ENCODE measurements at regions of chr9 and their contacts with region 1.

Region 1: DNA sequence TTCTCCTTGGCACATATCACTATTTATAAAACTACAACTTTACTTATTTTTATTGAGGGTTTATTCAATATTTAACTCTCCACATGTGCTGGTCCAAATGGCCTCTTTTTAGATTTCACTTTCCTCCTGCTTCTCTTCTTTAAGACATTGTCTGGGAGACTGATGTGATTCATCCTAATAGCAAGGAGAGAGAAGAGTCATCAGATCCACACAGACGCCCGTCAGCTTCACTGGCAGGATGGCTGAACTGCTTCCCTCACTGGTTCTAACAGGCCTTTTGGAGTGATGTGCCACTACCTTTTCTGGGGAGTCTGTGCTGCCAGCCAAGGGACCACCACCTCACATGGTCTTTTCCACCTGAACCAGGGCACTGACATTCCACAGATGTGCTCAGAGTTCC is 16.5 kb upstream of the ROR2 start:
- DNase-seq: no peak
- H3K4me3 ChIP-seq: no peak overlapping the region
- H3K27ac ChIP-seq: no peak overlapping the region
- H3K4me1 ChIP-seq: no peaks in the 10 kb centered on the region
- H3K27me3 ChIP-seq: no peaks in the 10 kb centered on the region
- CTCF ChIP-seq: no peak
- EP300 ChIP-seq: no peak
- POLR2A ChIP-seq: no peak
- RAD21 ChIP-seq: no peak

Region 2: GRCh38 chr9:91978739-91979414 is 12.4 kb after region 1 on chr9:
- CTCF ChIA-PET with region 1: interaction called, 18 read pairs
- POLR2A ChIA-PET with region 1: no interaction called
- DNase-seq: peak in 1 of 2 experiments; percentile 58
- H3K4me3 ChIP-seq: no peak overlapping the region
- H3K27ac ChIP-seq: no peak overlapping the region
- H3K4me1 ChIP-seq: no peaks in the 10 kb centered on the region
- H3K27me3 ChIP-seq: no peaks in the 10 kb centered on the region
- CTCF ChIP-seq: peak; percentile 56 to 86 (median 75)
- EP300 ChIP-seq: no peak
- POLR2A ChIP-seq: no peak
- RAD21 ChIP-seq: peak; percentile 80 to 86

Region 3: DNA sequence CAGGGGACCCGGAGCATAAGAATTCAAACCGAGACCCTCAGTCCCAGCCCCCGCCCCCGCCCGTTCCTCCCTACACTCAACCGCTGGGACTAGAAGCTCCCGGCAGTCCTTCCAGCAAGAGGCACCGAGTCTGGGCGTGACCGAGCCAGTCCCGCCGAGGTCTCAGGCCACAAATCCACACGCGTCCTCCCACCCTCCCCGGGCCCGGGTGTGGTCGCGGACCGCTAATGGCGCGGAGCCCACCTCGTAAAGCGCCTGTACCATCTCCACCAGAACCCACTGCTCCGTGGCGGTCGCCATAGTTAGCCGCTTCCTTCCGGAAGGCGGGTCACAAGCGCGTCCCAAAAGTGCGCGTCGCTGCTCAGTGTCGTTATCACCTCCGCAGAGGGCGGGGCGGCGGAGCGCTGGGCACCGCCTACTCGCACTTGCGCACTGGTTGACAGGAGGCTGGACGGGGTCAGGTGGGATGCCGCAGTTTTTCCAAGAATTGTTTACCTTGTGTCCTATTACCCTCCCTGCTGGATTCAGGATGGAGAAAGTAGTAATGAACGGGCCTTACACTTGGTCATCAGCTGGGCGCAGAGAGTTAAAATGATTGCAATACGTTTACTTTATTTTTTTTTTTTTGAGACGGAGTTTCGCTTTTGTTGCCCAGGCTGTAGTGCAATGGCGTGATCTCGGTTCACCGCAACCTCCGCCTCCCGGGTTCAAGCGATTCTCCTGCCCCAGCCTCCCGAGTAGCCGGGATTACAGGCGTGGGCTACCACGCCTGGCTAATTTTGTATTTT is 148.8 kb after region 1 on chr9 and contains the start of gene SPTLC1:
- CTCF ChIA-PET with region 1: no interaction called
- POLR2A ChIA-PET with region 1: no interaction called
- DNase-seq: peak in 1 of 2 experiments; percentile 95
- H3K4me3 ChIP-seq: peak within 1 kb of the TSS; percentile 73 to 99 (median 90)
- H3K27ac ChIP-seq: peak within 1 kb of the TSS; percentile 96
- H3K4me1 ChIP-seq: no peaks in the 10 kb centered on the region; a peak in 1 of 7 replicates
- H3K27me3 ChIP-seq: no peaks in the 10 kb centered on the region; a peak in 2 of 7 replicates
- CTCF ChIP-seq: no peak
- EP300 ChIP-seq: peak in 1 of 2 experiments; percentile 15; a peak in 1 of 3 replicates
- POLR2A ChIP-seq: peak; percentile 73 to 96
- RAD21 ChIP-seq: no peak
- total RNA-seq, gene SPTLC1: 62.1 and 64.2 TPM in 2 replicates

Measured in H1 (cell line).